ENCODE measurements at regions of chr7 and their contacts with region 1.

Region 1: DNA sequence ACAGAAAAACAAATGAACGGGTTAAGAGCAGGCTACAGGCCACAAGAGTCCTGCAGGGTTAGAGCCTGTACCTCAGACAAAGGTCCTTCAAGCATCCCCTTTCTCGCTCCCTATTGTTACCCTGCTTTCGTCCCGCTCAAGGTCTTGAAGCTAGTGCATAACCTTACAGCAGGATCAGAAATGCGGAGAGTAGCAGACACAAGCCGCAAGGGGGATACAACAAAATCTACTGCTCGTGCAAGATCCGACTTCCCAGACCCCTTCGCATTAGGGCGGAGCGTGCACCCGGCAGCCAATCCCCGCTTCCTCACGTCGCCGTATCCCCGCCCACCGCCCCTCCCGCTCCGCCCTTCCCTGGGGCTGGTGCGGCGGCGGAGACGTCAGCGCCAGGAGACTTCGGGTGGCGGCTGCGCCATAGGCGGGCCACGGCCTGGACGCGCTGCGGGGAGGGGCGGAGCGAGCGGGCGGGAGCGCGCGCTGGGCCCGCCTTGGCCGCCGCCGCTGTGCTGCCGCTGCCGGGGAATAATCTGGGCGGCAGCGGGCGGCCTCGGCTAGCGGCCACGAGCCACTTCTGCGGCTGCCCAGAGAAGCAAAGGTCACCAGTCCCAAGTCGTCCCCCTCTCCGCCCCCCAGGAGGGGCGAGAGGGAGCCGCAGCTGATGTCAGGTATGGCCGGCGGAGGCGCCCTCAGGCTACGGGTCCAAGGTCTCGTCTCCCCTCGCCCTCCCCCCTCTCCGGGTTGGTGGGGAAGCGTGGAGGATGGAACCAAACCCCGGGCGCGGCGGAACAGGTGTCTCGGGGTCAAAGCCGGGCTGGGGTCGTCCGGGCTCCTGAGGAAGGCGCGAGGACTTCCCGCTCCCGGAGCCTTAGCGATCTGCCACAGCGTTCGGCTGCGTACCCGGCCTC is at the start of gene C1GALT1:
- DNase-seq: peak; percentile 96 to 100 (median 98)
- ATAC-seq: peak; percentile 87
- H3K4me3 ChIP-seq: peak within 1 kb of the TSS; percentile 82 to 98
- H3K4me3 Mint-ChIP-seq: peak within 1 kb of the TSS; percentile 95
- H3K27ac ChIP-seq: peak within 1 kb of the TSS; percentile 90 to 93
- H3K27ac Mint-ChIP-seq: peak within 1 kb of the TSS; percentile 94
- H3K4me1 ChIP-seq: peaks cover 42% of the 10 kb centered on the region
- H3K4me1 Mint-ChIP-seq: peaks cover 8% of the 10 kb centered on the region
- H3K27me3 ChIP-seq: no peaks in the 10 kb centered on the region
- H3K27me3 Mint-ChIP-seq: no peaks in the 10 kb centered on the region
- CTCF ChIP-seq: peak; percentile 33
- total RNA-seq, gene C1GALT1: 57.4 to 60.7 TPM

Region 2: GRCh38 chr7:7103343-7104313 is 78.8 kb before region 1 on chr7:
- CTCF ChIA-PET with region 1: interaction called, 81 read pairs
- POLR2A ChIA-PET with region 1: interaction called, 23 read pairs
- intact Hi-C with region 1: loop called in 1 of 2 experiments (anchors 1 kb)
- DNase-seq: peak in 3 of 9 experiments; percentile 50 to 81 (median 73)
- ATAC-seq: peak; percentile 71
- H3K4me3 ChIP-seq: no peak overlapping the region
- H3K4me3 Mint-ChIP-seq: no peak overlapping the region
- H3K27ac ChIP-seq: no peak overlapping the region
- H3K27ac Mint-ChIP-seq: no peak overlapping the region
- H3K4me1 ChIP-seq: peaks cover 17% of the 10 kb centered on the region
- H3K4me1 Mint-ChIP-seq: peaks cover 20% of the 10 kb centered on the region
- H3K27me3 ChIP-seq: no peaks in the 10 kb centered on the region
- H3K27me3 Mint-ChIP-seq: no peaks in the 10 kb centered on the region
- CTCF ChIP-seq: peak; percentile 68

Region 3: GRCh38 chr7:7164591-7164990 is 17.8 kb before region 1 on chr7:
- CTCF ChIA-PET with region 1: interaction called, 13 read pairs
- POLR2A ChIA-PET with region 1: interaction called, 16 read pairs
- intact Hi-C with region 1: loop called in 1 of 2 experiments (anchors 2 kb)
- DNase-seq: no peak
- ATAC-seq: no peak
- H3K4me3 ChIP-seq: no peak overlapping the region
- H3K4me3 Mint-ChIP-seq: no peak overlapping the region
- H3K27ac ChIP-seq: no peak overlapping the region
- H3K27ac Mint-ChIP-seq: no peak overlapping the region
- H3K4me1 ChIP-seq: peaks cover 34% of the 10 kb centered on the region
- H3K4me1 Mint-ChIP-seq: peaks cover 46% of the 10 kb centered on the region
- H3K27me3 ChIP-seq: no peaks in the 10 kb centered on the region
- H3K27me3 Mint-ChIP-seq: no peaks in the 10 kb centered on the region
- CTCF ChIP-seq: no peak

Region 4: GRCh38 chr7:7228472-7228871 is 46.1 kb after region 1 on chr7:
- CTCF ChIA-PET with region 1: no interaction called
- POLR2A ChIA-PET with region 1: interaction called, 5 read pairs
- intact Hi-C with region 1: loop called in 1 of 2 experiments (anchors 5 kb)
- DNase-seq: no peak
- ATAC-seq: no peak
- H3K4me3 ChIP-seq: no peak overlapping the region
- H3K4me3 Mint-ChIP-seq: no peak overlapping the region
- H3K27ac ChIP-seq: no peak overlapping the region
- H3K27ac Mint-ChIP-seq: peak overlapping the region; percentile 14
- H3K4me1 ChIP-seq: no peaks in the 10 kb centered on the region
- H3K4me1 Mint-ChIP-seq: peaks cover 36% of the 10 kb centered on the region
- H3K27me3 ChIP-seq: no peaks in the 10 kb centered on the region
- H3K27me3 Mint-ChIP-seq: no peaks in the 10 kb centered on the region
- CTCF ChIP-seq: no peak

Region 5: GRCh38 chr7:7505915-7506314 is 323.5 kb after region 1 on chr7:
- CTCF ChIA-PET with region 1: no interaction called
- POLR2A ChIA-PET with region 1: no interaction called
- intact Hi-C with region 1: no loop called
- DNase-seq: no peak
- ATAC-seq: no peak
- H3K4me3 ChIP-seq: no peak overlapping the region
- H3K4me3 Mint-ChIP-seq: no peak overlapping the region
- H3K27ac ChIP-seq: no peak overlapping the region
- H3K27ac Mint-ChIP-seq: no peak overlapping the region
- H3K4me1 ChIP-seq: no peaks in the 10 kb centered on the region
- H3K4me1 Mint-ChIP-seq: no peaks in the 10 kb centered on the region
- H3K27me3 ChIP-seq: no peaks in the 10 kb centered on the region
- H3K27me3 Mint-ChIP-seq: no peaks in the 10 kb centered on the region
- CTCF ChIP-seq: no peak

Region 6: GRCh38 chr7:7542251-7542835 is 359.9 kb after region 1 on chr7:
- CTCF ChIA-PET with region 1: interaction called, 6 read pairs
- POLR2A ChIA-PET with region 1: no interaction called
- intact Hi-C with region 1: loop called in 1 of 2 experiments (anchors 2 kb)
- DNase-seq: no peak
- ATAC-seq: no peak
- H3K4me3 ChIP-seq: no peak overlapping the region
- H3K4me3 Mint-ChIP-seq: no peak overlapping the region
- H3K27ac ChIP-seq: no peak overlapping the region
- H3K27ac Mint-ChIP-seq: no peak overlapping the region
- H3K4me1 ChIP-seq: no peaks in the 10 kb centered on the region
- H3K4me1 Mint-ChIP-seq: peaks cover 2% of the 10 kb centered on the region
- H3K27me3 ChIP-seq: no peaks in the 10 kb centered on the region
- H3K27me3 Mint-ChIP-seq: peaks cover 2% of the 10 kb centered on the region
- CTCF ChIP-seq: no peak

Region 7: GRCh38 chr7:7640221-7641128 is 458.1 kb after region 1 on chr7 and contains the start of gene UMAD1:
- CTCF ChIA-PET with region 1: interaction called, 3 read pairs
- POLR2A ChIA-PET with region 1: interaction called, 8 read pairs
- intact Hi-C with region 1: loop called in 1 of 2 experiments (anchors 1 kb)
- DNase-seq: peak; percentile 96 to 100 (median 98)
- ATAC-seq: peak; percentile 87
- H3K4me3 ChIP-seq: peak within 1 kb of the TSS; percentile 84 to 94
- H3K4me3 Mint-ChIP-seq: peak within 1 kb of the TSS; percentile 97
- H3K27ac ChIP-seq: peak within 1 kb of the TSS; percentile 96 to 97
- H3K27ac Mint-ChIP-seq: peak within 1 kb of the TSS; percentile 96
- H3K4me1 ChIP-seq: peaks cover 22% of the 10 kb centered on the region
- H3K4me1 Mint-ChIP-seq: peaks cover 46% of the 10 kb centered on the region
- H3K27me3 ChIP-seq: no peaks in the 10 kb centered on the region
- H3K27me3 Mint-ChIP-seq: no peaks in the 10 kb centered on the region
- CTCF ChIP-seq: no peak
- total RNA-seq, gene UMAD1: 11.1 to 11.2 TPM

Region 8: GRCh38 chr7:7848246-7848645 is 665.8 kb after region 1 on chr7:
- CTCF ChIA-PET with region 1: no interaction called
- POLR2A ChIA-PET with region 1: no interaction called
- intact Hi-C with region 1: no loop called
- DNase-seq: peak in 2 of 9 experiments; percentile 4 to 39
- ATAC-seq: no peak
- H3K4me3 ChIP-seq: no peak overlapping the region
- H3K4me3 Mint-ChIP-seq: peak overlapping the region; percentile 40
- H3K27ac ChIP-seq: peak overlapping the region in 1 of 2 experiments; percentile 24
- H3K27ac Mint-ChIP-seq: peak overlapping the region; percentile 43
- H3K4me1 ChIP-seq: peaks cover 12% of the 10 kb centered on the region
- H3K4me1 Mint-ChIP-seq: peaks cover 27% of the 10 kb centered on the region
- H3K27me3 ChIP-seq: no peaks in the 10 kb centered on the region
- H3K27me3 Mint-ChIP-seq: no peaks in the 10 kb centered on the region
- CTCF ChIP-seq: no peak

Region 9: DNA sequence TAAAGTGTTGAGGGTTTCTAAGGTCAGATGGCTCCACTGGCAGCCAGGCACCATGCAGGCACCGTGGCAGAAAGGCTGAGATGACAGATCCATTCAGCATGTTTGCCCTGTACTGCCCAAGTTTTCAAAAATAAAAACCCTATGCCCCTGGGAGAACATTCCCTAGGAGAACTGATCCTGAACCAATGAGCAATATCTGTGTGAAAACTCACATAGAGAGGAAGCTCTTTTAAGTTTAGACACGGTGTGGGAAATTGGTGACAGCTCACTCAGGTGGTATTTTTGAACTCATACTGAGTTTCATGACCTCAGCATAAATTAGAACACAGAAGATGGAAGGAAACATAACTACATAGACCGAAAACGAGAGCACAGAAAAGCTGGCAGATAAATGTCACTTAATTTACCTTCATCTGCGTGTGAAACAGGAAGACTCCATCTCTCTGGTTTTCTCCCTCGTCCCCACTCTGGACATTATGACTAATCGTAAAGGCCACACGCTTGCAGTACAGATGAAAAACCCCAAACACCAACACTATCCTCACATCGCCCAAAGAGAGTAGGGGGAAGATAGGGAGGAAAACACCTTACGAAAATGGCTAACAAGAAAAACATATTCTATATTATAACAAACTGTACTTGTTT is 951.8 kb after region 1 on chr7:
- CTCF ChIA-PET with region 1: no interaction called
- POLR2A ChIA-PET with region 1: no interaction called
- intact Hi-C with region 1: loop called in 1 of 2 experiments (anchors 10 kb)
- DNase-seq: peak in 2 of 9 experiments; percentile 55 to 64
- ATAC-seq: peak; percentile 21
- H3K4me3 ChIP-seq: no peak overlapping the region
- H3K4me3 Mint-ChIP-seq: peak overlapping the region; percentile 37
- H3K27ac ChIP-seq: peak overlapping the region in 1 of 2 experiments; percentile 57
- H3K27ac Mint-ChIP-seq: peak overlapping the region; percentile 99
- H3K4me1 ChIP-seq: peaks cover 48% of the 10 kb centered on the region
- H3K4me1 Mint-ChIP-seq: peaks cover 60% of the 10 kb centered on the region
- H3K27me3 ChIP-seq: no peaks in the 10 kb centered on the region
- H3K27me3 Mint-ChIP-seq: no peaks in the 10 kb centered on the region
- CTCF ChIP-seq: no peak